A549 (cell line): ENCODE measurements at regions of chr9 and their contacts with region 1.

Region 1: DNA sequence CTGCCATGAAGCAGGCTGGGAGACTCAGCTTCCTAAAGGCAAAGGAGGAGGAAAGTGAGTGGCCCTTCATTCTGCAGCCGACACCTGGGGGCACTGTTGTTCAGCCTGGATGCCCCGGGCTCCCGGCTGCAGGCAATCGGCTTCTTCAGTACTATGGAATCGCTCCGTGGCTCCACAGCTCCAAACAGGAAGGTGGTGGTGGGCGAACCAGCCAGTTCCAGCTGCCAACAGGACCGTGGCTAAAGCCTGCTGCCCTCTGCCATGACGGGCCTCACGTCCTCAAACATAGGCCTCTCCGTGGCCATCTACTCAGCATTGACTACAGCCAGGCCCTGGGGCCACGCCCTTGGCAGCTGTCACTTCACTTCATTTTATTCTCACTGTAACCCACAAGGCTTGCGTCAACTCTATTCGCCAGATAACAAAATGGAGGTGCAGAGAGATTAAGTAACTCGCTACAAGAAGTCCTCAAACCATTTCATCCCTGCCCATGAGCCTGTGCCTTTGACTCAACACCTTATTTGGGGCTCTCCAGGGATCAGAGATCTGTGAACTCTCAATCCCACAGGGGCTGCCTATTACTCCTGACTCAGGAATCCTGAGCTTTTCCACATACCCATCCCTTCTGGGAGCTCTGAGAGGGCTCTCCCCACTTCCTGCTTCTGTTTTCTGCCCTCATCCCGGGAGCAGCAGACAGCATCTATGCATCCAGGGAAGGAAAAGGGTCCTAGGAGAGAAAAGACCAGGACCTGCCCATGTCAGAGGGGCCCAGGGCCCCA is 38.0 kb downstream of the PAX5 start:
- DNase-seq: peak; percentile 60 to 68
- ATAC-seq: peak; percentile 90 to 95
- H3K4me3 ChIP-seq: 0 out of 3 replicates have a peak overlapping the region, but pooled peaks have one; percentile 6
- H3K27ac ChIP-seq: no peak overlapping the region
- H3K4me1 ChIP-seq: no peaks in the 10 kb centered on the region
- CTCF ChIP-seq: peak; percentile 75
- EP300 ChIP-seq: no peak
- POLR2A ChIP-seq: no peak
- RAD21 ChIP-seq: peak; percentile 89 to 92

Region 2: GRCh38 chr9:36862206-36863145 is 133.6 kb before region 1 on chr9:
- CTCF ChIA-PET with region 1: interaction called, 11 read pairs
- POLR2A ChIA-PET with region 1: no interaction called
- DNase-seq: peak; percentile 55 to 60
- ATAC-seq: peak; percentile 85 to 88
- H3K4me3 ChIP-seq: no peak overlapping the region
- H3K27ac ChIP-seq: no peak overlapping the region
- H3K4me1 ChIP-seq: no peaks in the 10 kb centered on the region; the same call in 2 of the 3 replicates
- CTCF ChIP-seq: peak; percentile 66
- EP300 ChIP-seq: no peak
- POLR2A ChIP-seq: no peak
- RAD21 ChIP-seq: peak; percentile 56 to 57

Region 3: GRCh38 chr9:36974731-36975130 is 21.4 kb before region 1 on chr9:
- CTCF ChIA-PET with region 1: interaction called, 42 read pairs
- POLR2A ChIA-PET with region 1: no interaction called
- DNase-seq: peak in 1 of 2 experiments; percentile 27
- ATAC-seq: peak; percentile 75 to 83; a peak in 5 of 6 replicates
- H3K4me3 ChIP-seq: no peak overlapping the region
- H3K27ac ChIP-seq: no peak overlapping the region
- H3K4me1 ChIP-seq: peaks cover 14% of the 10 kb centered on the region; the same call in 2 of the 3 replicates
- CTCF ChIP-seq: peak; percentile 41; the same call in 2 of the 3 replicates
- EP300 ChIP-seq: no peak
- POLR2A ChIP-seq: no peak
- RAD21 ChIP-seq: peak; percentile 59 to 62

Region 4: GRCh38 chr9:36980148-36980974 is 15.8 kb before region 1 on chr9:
- CTCF ChIA-PET with region 1: interaction called, 42 read pairs
- POLR2A ChIA-PET with region 1: no interaction called
- DNase-seq: peak; percentile 32 to 35
- ATAC-seq: peak; percentile 53 to 73; a peak in 5 of 6 replicates
- H3K4me3 ChIP-seq: no peak overlapping the region
- H3K27ac ChIP-seq: no peak overlapping the region
- H3K4me1 ChIP-seq: peaks cover 10% of the 10 kb centered on the region; the same call in 1 of the 3 replicates
- CTCF ChIP-seq: peak; percentile 9; the same call in 1 of the 3 replicates
- EP300 ChIP-seq: no peak
- POLR2A ChIP-seq: no peak
- RAD21 ChIP-seq: peak; percentile 19 to 48; a peak in 2 of 5 replicates

Region 5: GRCh38 chr9:37262410-37262809 is 266.3 kb after region 1 on chr9:
- CTCF ChIA-PET with region 1: interaction called, 21 read pairs
- POLR2A ChIA-PET with region 1: interaction called, 3 read pairs
- DNase-seq: peak in 1 of 2 experiments; percentile 47
- ATAC-seq: peak in 1 of 2 experiments; percentile 76; a peak in 3 of 6 replicates
- H3K4me3 ChIP-seq: no peak overlapping the region
- H3K27ac ChIP-seq: no peak overlapping the region
- H3K4me1 ChIP-seq: no peaks in the 10 kb centered on the region
- CTCF ChIP-seq: peak; percentile 58
- EP300 ChIP-seq: no peak
- POLR2A ChIP-seq: no peak
- RAD21 ChIP-seq: peak; percentile 68 to 74

Region 6: GRCh38 chr9:37329576-37329975 is 333.5 kb after region 1 on chr9:
- CTCF ChIA-PET with region 1: interaction called, 49 read pairs
- POLR2A ChIA-PET with region 1: no interaction called
- DNase-seq: peak; percentile 17 to 68
- ATAC-seq: peak; percentile 64 to 66; a peak in 3 of 6 replicates
- H3K4me3 ChIP-seq: no peak overlapping the region
- H3K27ac ChIP-seq: no peak overlapping the region
- H3K4me1 ChIP-seq: peaks cover 17% of the 10 kb centered on the region; the same call in 2 of the 3 replicates
- CTCF ChIP-seq: peak; percentile 75
- EP300 ChIP-seq: no peak
- POLR2A ChIP-seq: no peak
- RAD21 ChIP-seq: peak; percentile 83

Region 7: GRCh38 chr9:37415011-37415719 is 419.0 kb after region 1 on chr9:
- CTCF ChIA-PET with region 1: interaction called, 18 read pairs
- POLR2A ChIA-PET with region 1: no interaction called
- DNase-seq: peak; percentile 80 to 87
- ATAC-seq: peak; percentile 67 to 86
- H3K4me3 ChIP-seq: no peak overlapping the region
- H3K27ac ChIP-seq: peak overlapping the region; percentile 73 to 77
- H3K4me1 ChIP-seq: peaks cover 35% of the 10 kb centered on the region
- CTCF ChIP-seq: peak; percentile 73
- EP300 ChIP-seq: no peak
- POLR2A ChIP-seq: no peak
- RAD21 ChIP-seq: peak; percentile 67 to 69